Stomach (tissue), 19 donors: ENCODE measurements at regions of chr10 and their contacts with region 1.

Region 1: DNA sequence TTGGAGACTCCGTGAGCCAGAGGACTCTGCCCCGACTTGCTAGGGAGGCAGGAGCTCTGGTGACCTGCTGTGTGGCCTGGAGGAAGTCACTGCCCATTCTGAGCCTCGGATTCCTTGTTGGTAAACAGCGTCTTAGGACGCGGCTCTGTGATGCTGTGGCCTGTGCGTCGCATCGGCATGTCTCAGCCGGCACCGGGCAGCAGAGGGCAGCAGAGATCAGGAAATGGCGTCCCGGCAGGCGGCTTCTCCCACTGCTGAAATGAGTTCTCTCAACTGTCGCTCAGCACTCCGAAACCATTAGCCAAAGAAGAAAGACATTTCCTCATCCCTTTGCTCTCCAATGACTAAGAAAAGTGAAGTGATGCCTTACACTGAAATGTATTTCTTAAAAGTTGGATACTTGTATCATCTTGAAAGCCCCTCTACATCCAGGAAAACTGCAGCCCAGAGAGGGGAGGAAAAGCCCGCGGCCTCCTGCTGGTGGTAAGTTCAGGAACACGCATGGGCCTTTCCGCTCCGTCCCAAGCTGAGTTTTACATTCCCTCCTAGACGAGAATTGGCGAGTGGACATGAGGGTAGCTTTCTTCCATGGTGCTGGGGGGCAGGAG is 91.7 kb downstream of the WDR11 start:
- DNase-seq: peak; percentile 80 to 94
- H3K4me3 ChIP-seq: no peak overlapping the region
- H3K27ac ChIP-seq: no peak overlapping the region
- H3K4me1 ChIP-seq: peaks cover 5 to 21% (median 12%) of the 10 kb centered on the region in 4 donors
- H3K27me3 ChIP-seq: peaks cover 0 to 25% (median 0%) of the 10 kb centered on the region in 3 donors
- CTCF ChIP-seq: peak in 5 of 7 experiments; percentile 68 to 87 (median 81)
- EP300 ChIP-seq: no peak
- POLR2A ChIP-seq: no peak

Region 2: DNA sequence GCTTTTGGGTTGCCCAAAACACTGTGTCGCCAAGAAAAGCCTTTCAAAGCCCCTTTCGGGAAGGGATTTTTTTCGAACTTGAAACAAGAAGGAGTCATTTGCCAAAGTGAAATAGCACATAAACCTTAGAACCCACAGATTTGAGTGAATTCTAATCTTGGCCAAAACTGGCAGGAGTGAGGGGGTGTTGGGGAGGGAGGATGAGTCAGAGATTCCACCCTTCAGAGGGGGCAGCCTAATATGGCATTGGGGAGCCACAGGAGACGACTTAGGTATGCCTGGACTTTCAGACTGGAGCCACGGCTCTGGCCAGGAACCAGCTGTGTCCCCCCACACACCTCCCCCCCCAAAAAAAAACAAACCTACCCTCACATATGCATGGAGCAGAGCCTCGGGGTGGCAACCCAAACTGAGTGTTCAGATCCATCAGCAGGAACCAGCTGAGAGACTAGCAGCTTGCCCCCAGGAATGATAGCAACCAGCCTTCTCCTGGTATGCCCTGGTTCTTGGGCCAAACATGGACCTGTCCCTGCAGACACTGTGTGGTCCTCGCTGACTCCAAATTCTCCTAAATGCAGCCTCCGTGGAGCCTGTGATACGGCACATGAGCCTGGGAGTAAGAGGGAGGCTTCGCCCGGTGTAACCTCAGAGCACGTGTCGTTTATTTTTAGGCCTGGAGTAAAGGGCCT is 517.0 kb after region 1 on chr10:
- intact Hi-C with region 1: no loop called
- DNase-seq: peak in 1 of 2 donors; percentile 48
- H3K4me3 ChIP-seq: no peak overlapping the region
- H3K27ac ChIP-seq: peak overlapping the region in 2 of 5 donors; percentile 19 to 60
- H3K4me1 ChIP-seq: peaks cover 0 to 12% (median 0%) of the 10 kb centered on the region in 4 donors
- H3K27me3 ChIP-seq: no peaks in the 10 kb centered on the region
- CTCF ChIP-seq: no peak
- EP300 ChIP-seq: no peak
- POLR2A ChIP-seq: no peak

Region 3: GRCh38 chr10:121608469-121609190 is 665.7 kb after region 1 on chr10:
- intact Hi-C with region 1: loop called (anchors 10 kb)
- DNase-seq: peak; percentile 61 to 83
- H3K4me3 ChIP-seq: peak overlapping the region; percentile 20 to 45 (median 32)
- H3K27ac ChIP-seq: no peak overlapping the region
- H3K4me1 ChIP-seq: peaks cover 0 to 20% (median 12%) of the 10 kb centered on the region in 4 donors
- H3K27me3 ChIP-seq: peaks cover 0 to 57% (median 8%) of the 10 kb centered on the region in 3 donors
- CTCF ChIP-seq: peak in 5 of 7 experiments; percentile 45 to 95 (median 86)
- EP300 ChIP-seq: no peak
- POLR2A ChIP-seq: no peak

Region 4: DNA sequence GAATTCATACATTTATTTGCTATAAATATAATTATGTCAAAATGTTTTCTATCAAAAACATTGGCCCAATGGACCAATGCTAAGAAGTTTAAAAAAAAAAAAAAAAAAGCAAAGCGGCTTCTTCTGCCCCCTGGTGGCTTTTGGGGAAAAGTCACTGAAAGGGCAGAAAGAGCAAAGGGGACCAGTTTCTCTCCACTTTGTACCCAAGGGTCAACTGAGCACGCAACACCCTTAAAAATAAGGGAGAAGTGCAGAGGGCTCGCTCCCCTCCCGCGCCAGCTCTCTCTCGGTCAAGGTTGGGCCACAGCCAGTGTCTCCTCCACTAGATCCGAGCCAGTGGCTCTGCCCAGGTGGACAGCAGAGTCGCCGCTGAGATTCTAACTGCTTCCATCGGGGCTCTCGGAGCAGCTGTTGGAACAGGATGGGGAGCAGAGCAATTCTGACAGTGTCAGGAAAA is 791.7 kb after region 1 on chr10:
- intact Hi-C with region 1: loop called (anchors 5 kb)
- DNase-seq: peak in 1 of 2 donors; percentile 42
- H3K4me3 ChIP-seq: no peak overlapping the region
- H3K27ac ChIP-seq: no peak overlapping the region
- H3K4me1 ChIP-seq: peaks cover 0 to 11% (median 0%) of the 10 kb centered on the region in 4 donors
- H3K27me3 ChIP-seq: peaks cover 0 to 25% (median 5%) of the 10 kb centered on the region in 3 donors
- CTCF ChIP-seq: peak in 5 of 7 experiments; percentile 13 to 67 (median 59)
- EP300 ChIP-seq: no peak
- POLR2A ChIP-seq: no peak

Region 5: GRCh38 chr10:121891103-121891502 is 948.2 kb after region 1 on chr10:
- intact Hi-C with region 1: loop called (anchors 5 kb)
- DNase-seq: no peak
- H3K4me3 ChIP-seq: no peak overlapping the region
- H3K27ac ChIP-seq: no peak overlapping the region
- H3K4me1 ChIP-seq: no peaks in the 10 kb centered on the region
- H3K27me3 ChIP-seq: no peaks in the 10 kb centered on the region
- CTCF ChIP-seq: no peak
- EP300 ChIP-seq: no peak
- POLR2A ChIP-seq: no peak